ENCODE measurements at regions of chr15 and their contacts with region 1.

Region 1: GRCh38 chr15:75738647-75739331 is 26.1 kb upstream of the CSPG4 start:
- DNase-seq: peak; percentile 95
- ATAC-seq: peak; percentile 100
- H3K4me3 Mint-ChIP-seq: peak overlapping the region; percentile 76
- H3K27ac Mint-ChIP-seq: peak overlapping the region; percentile 23
- H3K4me1 Mint-ChIP-seq: peaks cover 8% of the 10 kb centered on the region
- H3K27me3 Mint-ChIP-seq: peaks cover 1% of the 10 kb centered on the region

Region 2: GRCh38 chr15:75750261-75751050 is 11.7 kb after region 1 on chr15:
- CTCF ChIA-PET with region 1: no interaction called
- POLR2A ChIA-PET with region 1: no interaction called
- intact Hi-C with region 1: loop called in 1 of 2 experiments (anchors 1 kb)
- DNase-seq: no peak
- ATAC-seq: no peak
- H3K4me3 Mint-ChIP-seq: no peak overlapping the region
- H3K27ac Mint-ChIP-seq: no peak overlapping the region
- H3K4me1 Mint-ChIP-seq: peaks cover 10% of the 10 kb centered on the region
- H3K27me3 Mint-ChIP-seq: peaks cover 3% of the 10 kb centered on the region

Region 3: DNA sequence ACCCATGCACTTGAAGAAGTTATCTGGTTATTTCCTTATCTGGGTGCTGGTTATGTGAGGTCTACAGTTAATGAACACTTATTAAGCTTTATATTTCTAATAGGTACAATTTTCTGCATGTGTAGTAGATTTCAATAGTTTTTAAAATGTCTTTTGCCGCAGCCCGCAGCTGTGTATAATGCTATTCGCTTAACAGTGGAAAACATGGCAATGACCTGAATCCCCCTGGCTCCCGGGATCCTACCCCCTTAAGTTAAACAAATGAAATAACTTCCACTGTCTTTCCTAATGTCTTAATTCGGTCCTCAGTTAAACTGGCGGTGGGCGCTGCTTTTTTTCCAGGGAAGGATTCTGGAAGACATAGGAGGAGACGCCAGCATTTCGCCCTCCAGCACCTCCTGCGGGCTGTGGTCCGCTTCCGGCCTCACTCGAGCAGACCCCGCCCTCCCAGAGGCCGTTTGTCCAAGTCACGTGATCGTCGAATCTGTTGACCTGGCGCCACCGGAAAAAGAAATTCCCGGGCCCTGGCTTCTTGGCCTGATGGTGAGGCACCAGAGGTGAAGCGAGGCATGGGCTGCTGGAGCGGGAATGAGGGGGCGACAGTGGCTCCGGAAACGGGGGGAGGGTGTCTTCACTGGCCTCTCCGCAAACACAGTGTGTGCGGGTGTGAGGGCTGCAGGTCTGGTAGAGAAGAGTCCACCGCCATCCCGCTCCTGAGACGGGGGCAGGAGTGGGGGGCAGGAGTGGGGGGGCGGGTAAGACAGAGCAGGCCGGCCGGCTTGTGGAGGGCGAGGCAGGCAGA is 19.5 kb after region 1 on chr15:
- CTCF ChIA-PET with region 1: no interaction called
- POLR2A ChIA-PET with region 1: no interaction called
- intact Hi-C with region 1: loop called in 1 of 2 experiments (anchors 1 kb)
- DNase-seq: peak; percentile 81
- ATAC-seq: peak; percentile 95
- H3K4me3 Mint-ChIP-seq: peak overlapping the region; percentile 85
- H3K27ac Mint-ChIP-seq: peak overlapping the region; percentile 89
- H3K4me1 Mint-ChIP-seq: peaks cover 14% of the 10 kb centered on the region
- H3K27me3 Mint-ChIP-seq: no peaks in the 10 kb centered on the region

Region 4: DNA sequence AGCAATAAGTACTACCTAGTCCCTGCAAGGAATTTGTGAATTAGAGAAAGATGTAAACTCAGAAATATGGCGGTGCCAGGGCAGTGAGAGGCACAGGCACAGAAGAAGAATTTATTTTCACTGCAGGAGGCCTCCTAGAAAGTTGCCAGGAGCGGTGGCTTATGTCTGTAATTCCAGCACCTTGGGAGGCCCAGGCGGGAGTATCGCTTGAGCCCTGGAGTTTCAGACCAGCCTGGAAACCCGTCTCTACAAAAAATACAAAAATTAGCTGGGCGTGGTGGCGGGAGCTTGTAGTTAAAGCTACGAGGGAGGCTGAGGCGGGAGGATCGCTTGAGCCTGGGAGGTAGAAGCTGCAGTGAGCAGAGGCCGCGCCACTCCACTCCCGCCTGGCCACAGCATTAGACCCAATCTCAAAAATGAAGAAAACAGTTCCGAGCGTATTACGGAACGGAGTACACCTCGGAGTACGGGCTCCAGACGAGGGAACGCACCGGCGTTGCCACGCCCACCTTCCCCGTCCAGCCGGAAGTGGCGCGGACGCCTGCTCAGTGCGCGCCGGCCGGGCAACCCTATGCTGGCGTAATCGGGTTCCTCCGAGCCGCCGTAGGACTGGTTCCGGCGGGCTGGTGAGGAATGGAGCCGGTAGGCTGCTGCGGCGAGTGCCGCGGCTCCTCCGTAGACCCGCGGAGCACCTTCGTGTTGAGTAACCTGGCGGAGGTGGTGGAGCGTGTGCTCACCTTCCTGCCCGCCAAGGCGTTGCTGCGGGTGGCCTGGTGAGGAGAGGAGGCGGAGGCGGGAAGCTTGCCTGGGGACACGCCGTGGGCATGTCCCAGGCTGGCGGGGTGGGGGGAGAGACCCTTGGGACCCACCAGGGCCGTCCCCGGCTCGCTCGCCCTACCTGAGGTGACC is 164.8 kb after region 1 on chr15 and contains the start of gene FBXO22:
- CTCF ChIA-PET with region 1: interaction called, 4 read pairs
- POLR2A ChIA-PET with region 1: no interaction called
- intact Hi-C with region 1: loop called in 1 of 2 experiments (anchors 2 kb)
- DNase-seq: peak; percentile 97
- ATAC-seq: peak; percentile 97
- H3K4me3 Mint-ChIP-seq: peak within 1 kb of the TSS; percentile 97
- H3K27ac Mint-ChIP-seq: peak within 1 kb of the TSS; percentile 98
- H3K4me1 Mint-ChIP-seq: peaks cover 40% of the 10 kb centered on the region
- H3K27me3 Mint-ChIP-seq: no peaks in the 10 kb centered on the region
- total RNA-seq, gene FBXO22: 51.4 to 59.2 TPM

Measured in activated CD4-positive, alpha-beta T cell treated with anti-CD3 and anti-CD28 coated beads for 36 hours (primary cell).